ENCODE measurements at regions of chr16 and their contacts with region 1.

Region 1: GRCh38 chr16:78170436-78170933 is 71.0 kb downstream of the WWOX start:
- DNase-seq: no peak
- H3K4me3 ChIP-seq: no peak overlapping the region
- H3K27ac ChIP-seq: no peak overlapping the region
- H3K4me1 ChIP-seq: no peaks in the 10 kb centered on the region
- H3K27me3 ChIP-seq: no peaks in the 10 kb centered on the region
- CTCF ChIP-seq: no peak
- EP300 ChIP-seq: no peak
- POLR2A ChIP-seq: no peak

Region 2: GRCh38 chr16:77009453-77009852 is 1161.0 kb before region 1 on chr16:
- intact Hi-C with region 1: no loop called
- DNase-seq: no peak
- H3K4me3 ChIP-seq: no peak overlapping the region
- H3K27ac ChIP-seq: no peak overlapping the region
- H3K4me1 ChIP-seq: no peaks in the 10 kb centered on the region
- H3K27me3 ChIP-seq: no peaks in the 10 kb centered on the region
- CTCF ChIP-seq: no peak
- EP300 ChIP-seq: no peak
- POLR2A ChIP-seq: no peak

Region 3: DNA sequence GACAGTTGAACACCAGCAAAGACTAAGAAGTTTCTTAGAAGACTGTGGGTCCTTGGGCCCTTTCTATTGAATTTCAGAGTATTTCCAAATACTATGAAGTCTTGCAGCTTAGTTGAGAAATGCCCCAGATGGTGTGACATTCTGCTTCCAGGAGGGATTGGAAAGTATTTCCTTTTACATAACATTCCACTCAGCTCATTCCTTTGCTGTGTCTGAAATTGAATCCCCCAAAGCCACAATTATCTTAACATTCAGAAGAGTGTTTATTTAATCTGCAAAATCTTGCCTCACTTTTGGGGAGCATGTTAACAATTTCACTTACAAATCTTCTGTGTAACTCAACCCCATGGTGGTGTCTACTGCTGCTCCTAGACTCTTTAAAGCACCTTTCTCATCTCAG is 236.7 kb after region 1 on chr16:
- intact Hi-C with region 1: no loop called
- DNase-seq: no peak
- H3K4me3 ChIP-seq: no peak overlapping the region
- H3K27ac ChIP-seq: no peak overlapping the region
- H3K4me1 ChIP-seq: no peaks in the 10 kb centered on the region
- H3K27me3 ChIP-seq: no peaks in the 10 kb centered on the region
- CTCF ChIP-seq: no peak
- EP300 ChIP-seq: no peak
- POLR2A ChIP-seq: no peak

Region 4: GRCh38 chr16:79191917-79192364 is 1021.5 kb after region 1 on chr16:
- intact Hi-C with region 1: loop called in 1 of 4 experiments (anchors 5 kb)
- DNase-seq: no peak
- H3K4me3 ChIP-seq: no peak overlapping the region
- H3K27ac ChIP-seq: no peak overlapping the region
- H3K4me1 ChIP-seq: no peaks in the 10 kb centered on the region
- H3K27me3 ChIP-seq: no peaks in the 10 kb centered on the region
- CTCF ChIP-seq: no peak
- EP300 ChIP-seq: no peak
- POLR2A ChIP-seq: no peak

Measured in ovary (tissue), 10 donors.